Colonic mucosa (tissue), 4 donors: ENCODE measurements at regions of chr2 and their contacts with region 1.

Region 1: GRCh38 chr2:84526562-84526961 is 10.3 kb downstream of the DNAH6 start:
- DNase-seq: no peak
- H3K4me3 ChIP-seq: no peak overlapping the region
- H3K27ac ChIP-seq: peak overlapping the region; percentile 18
- H3K4me1 ChIP-seq: peaks cover 6% of the 10 kb centered on the region
- H3K27me3 ChIP-seq: no peaks in the 10 kb centered on the region
- CTCF ChIP-seq: peak; percentile 21

Region 2: DNA sequence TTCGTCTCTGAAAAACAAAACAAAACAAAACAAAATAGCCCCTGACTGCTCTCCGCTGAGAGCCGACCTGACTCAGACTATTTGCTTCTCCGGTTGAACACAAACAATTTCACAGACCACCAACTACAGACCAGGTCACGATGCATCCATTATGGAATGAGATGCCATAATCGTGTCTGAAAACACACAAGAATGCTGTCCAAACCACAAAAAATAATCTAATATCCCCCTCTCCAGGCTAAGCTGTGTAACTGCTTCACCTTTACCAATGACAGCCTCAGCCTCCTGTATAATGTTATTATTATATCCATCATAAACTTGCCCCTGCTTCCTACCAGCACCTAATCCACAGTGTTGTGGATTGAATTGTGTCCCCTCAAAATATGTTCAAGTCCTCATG is 104.5 kb after region 1 on chr2:
- intact Hi-C with region 1: loop called (anchors 10 kb)
- DNase-seq: no peak
- H3K4me3 ChIP-seq: no peak overlapping the region
- H3K27ac ChIP-seq: no peak overlapping the region
- H3K4me1 ChIP-seq: no peaks in the 10 kb centered on the region
- H3K27me3 ChIP-seq: no peaks in the 10 kb centered on the region
- CTCF ChIP-seq: peak; percentile 56

Region 3: DNA sequence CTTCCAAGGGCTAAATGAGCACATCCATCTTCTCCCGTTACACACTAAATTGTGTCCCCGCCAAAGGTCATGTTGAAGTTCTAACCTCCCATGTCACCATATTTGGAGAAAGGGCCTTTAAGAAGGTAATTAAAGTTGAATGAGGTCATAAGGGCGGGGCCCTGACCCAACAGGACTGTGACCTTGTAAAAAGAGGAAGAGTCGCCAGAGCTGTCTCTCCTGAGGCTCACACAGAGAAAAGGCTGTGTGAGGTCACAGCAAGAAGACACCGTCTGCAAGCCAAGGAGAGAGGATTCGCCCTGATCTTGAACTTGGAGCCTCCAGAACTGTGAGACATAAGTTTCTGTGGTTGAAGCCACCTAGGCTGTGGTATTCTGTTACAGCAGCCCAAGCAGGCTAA is 330.2 kb after region 1 on chr2:
- intact Hi-C with region 1: loop called (anchors 10 kb)
- DNase-seq: no peak
- H3K4me3 ChIP-seq: no peak overlapping the region
- H3K27ac ChIP-seq: no peak overlapping the region
- H3K4me1 ChIP-seq: no peaks in the 10 kb centered on the region
- H3K27me3 ChIP-seq: no peaks in the 10 kb centered on the region
- CTCF ChIP-seq: no peak